AG04449 (cell line): ENCODE measurements at regions of chr2 and their contacts with region 1.

Region 1: DNA sequence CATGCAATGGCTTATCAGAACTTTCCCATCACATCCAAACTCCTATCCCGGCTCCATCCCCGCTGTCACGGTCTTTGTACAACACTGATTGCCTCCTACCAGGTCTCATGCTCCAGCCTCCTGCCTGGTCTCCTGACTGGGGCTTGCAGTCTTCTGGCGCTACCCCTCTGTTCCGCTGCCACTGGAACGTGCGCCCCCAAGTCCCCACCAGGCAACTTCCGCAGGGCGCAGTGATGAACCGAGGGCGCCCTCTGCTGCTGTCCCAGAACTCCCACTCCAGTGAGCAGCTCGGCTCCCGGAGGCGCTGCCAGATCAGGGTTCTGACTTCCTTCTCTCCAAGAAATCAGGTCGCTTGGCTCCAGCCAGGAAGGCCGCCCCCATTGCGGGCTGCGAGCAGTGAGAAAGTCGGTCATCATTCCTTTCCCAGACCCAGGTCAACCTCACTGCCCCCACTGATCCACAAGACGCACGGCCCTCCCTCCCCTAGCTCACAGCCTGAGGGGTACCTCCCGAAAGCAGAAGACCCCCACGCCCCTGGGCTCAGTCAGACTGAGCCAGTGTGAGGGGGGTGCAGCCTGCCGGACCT is 43.9 kb upstream of the RAB11FIP5 start:
- DNase-seq: no peak
- H3K4me3 ChIP-seq: peak overlapping the region; percentile 44
- CTCF ChIP-seq: peak; percentile 96

Region 2: GRCh38 chr2:72993147-72993932 is 163.3 kb before region 1 on chr2:
- CTCF ChIA-PET with region 1: interaction called, 129 read pairs
- POLR2A ChIA-PET with region 1: no interaction called
- DNase-seq: no peak
- H3K4me3 ChIP-seq: no peak overlapping the region
- CTCF ChIP-seq: peak; percentile 66

Region 3: DNA sequence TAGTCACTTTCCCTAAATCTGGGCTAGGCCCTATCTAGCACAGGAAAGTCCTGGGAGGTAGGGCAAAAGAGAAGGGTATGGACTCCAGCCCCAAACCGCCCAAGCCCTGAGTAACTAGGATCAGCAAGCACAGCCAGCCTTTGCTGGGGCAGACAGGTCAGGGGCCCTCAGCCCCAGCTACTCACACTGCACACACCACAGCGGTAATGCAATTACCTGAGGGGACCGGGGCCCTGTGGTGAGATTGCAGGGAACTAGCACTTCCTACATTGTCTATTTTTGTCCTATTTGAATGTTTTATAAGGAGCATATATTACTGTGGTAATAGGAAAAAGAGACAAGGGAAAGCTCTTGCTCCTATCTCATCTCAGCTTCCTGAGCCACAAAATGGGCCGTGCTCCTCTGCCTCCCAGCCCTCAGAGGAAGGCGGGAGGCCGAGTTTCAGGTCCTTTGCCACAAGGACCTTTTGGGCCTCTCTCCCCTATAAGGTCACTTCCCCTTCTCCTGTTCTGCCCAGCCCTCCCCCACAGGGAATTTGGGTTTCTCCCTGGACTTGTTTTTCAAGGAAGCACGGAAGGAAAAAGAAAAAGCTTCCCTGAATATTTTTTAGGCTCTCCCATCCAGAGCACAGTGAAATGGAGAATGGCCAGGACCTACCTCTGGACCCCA is 64.4 kb before region 1 on chr2:
- CTCF ChIA-PET with region 1: interaction called, 502 read pairs
- POLR2A ChIA-PET with region 1: interaction called, 4 read pairs
- DNase-seq: no peak
- H3K4me3 ChIP-seq: no peak overlapping the region
- CTCF ChIP-seq: no peak

Region 4: GRCh38 chr2:73112913-73113633 is 43.6 kb before region 1 on chr2 and contains the start of gene RAB11FIP5:
- CTCF ChIA-PET with region 1: interaction called, 11 read pairs
- POLR2A ChIA-PET with region 1: no interaction called
- DNase-seq: no peak
- H3K4me3 ChIP-seq: peak within 1 kb of the TSS; percentile 83
- CTCF ChIP-seq: no peak

Region 5: GRCh38 chr2:73128841-73129535 is 27.6 kb before region 1 on chr2:
- CTCF ChIA-PET with region 1: interaction called, 11 read pairs
- POLR2A ChIA-PET with region 1: no interaction called
- DNase-seq: no peak
- H3K4me3 ChIP-seq: no peak overlapping the region
- CTCF ChIP-seq: no peak

Region 6: GRCh38 chr2:73134471-73134870 is 22.2 kb before region 1 on chr2:
- CTCF ChIA-PET with region 1: interaction called, 49 read pairs
- POLR2A ChIA-PET with region 1: no interaction called
- DNase-seq: no peak
- H3K4me3 ChIP-seq: no peak overlapping the region
- CTCF ChIP-seq: no peak

Region 7: GRCh38 chr2:73142937-73143336 is 13.7 kb before region 1 on chr2:
- CTCF ChIA-PET with region 1: interaction called, 49 read pairs
- POLR2A ChIA-PET with region 1: no interaction called
- DNase-seq: no peak
- H3K4me3 ChIP-seq: no peak overlapping the region
- CTCF ChIP-seq: no peak

Region 8: GRCh38 chr2:73233154-73233931 is 76.7 kb after region 1 on chr2 and contains the start of gene PRADC1:
- CTCF ChIA-PET with region 1: no interaction called
- POLR2A ChIA-PET with region 1: no interaction called
- DNase-seq: peak; percentile 97
- H3K4me3 ChIP-seq: peak within 1 kb of the TSS; percentile 93
- CTCF ChIP-seq: no peak